Common myeloid progenitor, CD34-positive (primary cell): ENCODE measurements at regions of chr12 and their contacts with region 1.

Region 1: DNA sequence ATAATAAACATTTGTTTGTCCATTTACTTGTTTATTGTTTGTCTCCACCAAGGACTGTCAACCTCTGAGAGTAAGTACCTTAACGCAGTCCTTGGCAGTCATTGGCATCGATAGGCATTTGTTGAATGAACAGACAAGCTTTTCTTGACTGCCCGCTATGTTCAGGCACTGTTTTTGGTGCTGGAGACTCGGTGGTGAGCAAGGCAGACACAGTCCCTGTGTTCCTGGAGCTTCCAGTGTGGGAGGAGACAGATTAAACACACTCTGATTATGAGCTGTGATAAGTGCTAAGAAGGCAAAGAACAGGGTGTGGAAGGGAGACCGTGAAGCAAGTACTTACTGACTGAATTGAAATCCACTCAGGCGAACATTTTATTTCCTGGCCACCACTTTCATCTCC is 1.2 kb downstream of the ATP6V0A2 start:
- DNase-seq: no peak
- H3K4me3 ChIP-seq: peak overlapping the region; percentile 20 to 99 (median 94)
- H3K27ac ChIP-seq: peak overlapping the region; percentile 78 to 88
- H3K4me1 ChIP-seq: peaks cover 12 to 36% (median 29%) of the 10 kb centered on the region in 4 experiments
- H3K27me3 ChIP-seq: no peaks in the 10 kb centered on the region

Region 2: GRCh38 chr12:123546281-123546680 is 167.1 kb before region 1 on chr12:
- CTCF ChIA-PET with region 1: no interaction called
- POLR2A ChIA-PET with region 1: no interaction called
- DNase-seq: no peak
- H3K4me3 ChIP-seq: no peak overlapping the region
- H3K27ac ChIP-seq: no peak overlapping the region
- H3K4me1 ChIP-seq: no peaks in the 10 kb centered on the region
- H3K27me3 ChIP-seq: peaks cover 0 to 2% (median 0%) of the 10 kb centered on the region in 5 experiments

Region 3: GRCh38 chr12:123744836-123745235 is 31.4 kb after region 1 on chr12:
- CTCF ChIA-PET with region 1: interaction called, 18 read pairs
- POLR2A ChIA-PET with region 1: interaction called, 14 read pairs
- DNase-seq: peak in 2 of 3 donors; percentile 33 to 37
- H3K4me3 ChIP-seq: no peak overlapping the region
- H3K27ac ChIP-seq: peak overlapping the region in 1 of 2 experiments; percentile 84
- H3K4me1 ChIP-seq: peaks cover 25 to 86% (median 69%) of the 10 kb centered on the region in 4 experiments
- H3K27me3 ChIP-seq: no peaks in the 10 kb centered on the region

Region 4: GRCh38 chr12:123761841-123762714 is 48.7 kb after region 1 on chr12 and contains the start of gene DNAH10:
- CTCF ChIA-PET with region 1: interaction called, 10 read pairs
- POLR2A ChIA-PET with region 1: interaction called, 8 read pairs
- DNase-seq: peak; percentile 73 to 85 (median 81)
- H3K4me3 ChIP-seq: peak within 1 kb of the TSS; percentile 56 to 83 (median 64)
- H3K27ac ChIP-seq: peak within 1 kb of the TSS in 1 of 2 experiments; percentile 43
- H3K4me1 ChIP-seq: peaks cover 5 to 22% (median 13%) of the 10 kb centered on the region in 4 experiments
- H3K27me3 ChIP-seq: no peaks in the 10 kb centered on the region